ENCODE measurements at regions of chr15 and their contacts with region 1.

Region 1: GRCh38 chr15:49155110-49155833 is at the start of gene COPS2:
- DNase-seq: peak; percentile 78
- ATAC-seq: peak; percentile 93
- H3K4me3 Mint-ChIP-seq: peak within 1 kb of the TSS; percentile 95
- H3K27ac Mint-ChIP-seq: peak within 1 kb of the TSS; percentile 95
- H3K4me1 Mint-ChIP-seq: peaks cover 43% of the 10 kb centered on the region
- H3K27me3 Mint-ChIP-seq: no peaks in the 10 kb centered on the region
- CTCF ChIP-seq: no peak
- total RNA-seq, gene COPS2: 53.1 and 54.4 TPM in 2 replicates

Region 2: DNA sequence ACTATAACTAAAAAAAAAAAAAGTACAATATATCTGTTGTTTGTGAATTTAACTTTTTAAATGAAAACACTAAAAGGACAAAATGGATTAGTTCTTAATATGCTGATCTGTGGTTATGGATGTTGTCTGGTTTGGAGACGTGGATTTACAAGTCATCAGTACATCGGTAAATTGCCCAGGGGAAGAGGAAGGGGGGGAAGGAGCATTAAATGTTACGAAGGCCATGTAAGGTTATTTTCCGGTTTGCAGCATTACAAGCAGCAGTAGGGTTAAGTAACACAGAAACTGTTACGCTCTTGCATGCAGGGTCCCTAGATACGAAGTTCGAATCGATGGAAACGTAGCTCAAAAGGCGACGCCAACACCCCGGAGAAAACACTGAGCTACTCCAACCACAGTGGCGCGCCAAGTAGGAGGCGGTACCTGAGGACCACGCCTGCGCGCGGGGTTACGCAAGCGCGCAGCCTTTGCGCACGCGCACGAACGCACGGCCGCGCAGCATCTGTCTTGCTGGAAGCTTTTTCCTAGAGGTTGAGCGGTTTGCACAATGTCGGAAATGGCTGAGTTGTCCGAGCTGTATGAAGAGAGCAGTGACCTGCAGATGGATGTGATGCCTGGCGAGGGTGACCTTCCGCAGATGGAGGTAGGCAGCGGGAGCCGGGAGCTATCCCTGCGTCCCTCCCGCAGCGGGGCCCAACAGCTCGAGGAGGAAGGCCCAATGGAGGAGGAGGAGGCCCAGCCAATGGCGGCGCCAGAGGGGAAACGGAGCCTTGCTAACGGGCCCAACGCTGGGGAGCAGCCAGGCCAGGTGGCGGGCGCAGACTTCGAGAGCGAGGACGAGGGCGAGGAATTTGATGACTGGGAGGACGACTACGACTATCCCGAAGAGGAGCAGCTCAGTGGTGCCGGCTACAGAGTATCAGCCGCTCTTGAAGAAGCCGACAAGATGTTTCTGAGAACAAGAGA is 277.4 kb before region 1 on chr15 and contains the start of gene EID1:
- CTCF ChIA-PET with region 1: interaction called, 4 read pairs
- POLR2A ChIA-PET with region 1: interaction called, 9 read pairs
- intact Hi-C with region 1: loop called (anchors 1 kb)
- DNase-seq: peak; percentile 90
- ATAC-seq: peak; percentile 95
- H3K4me3 Mint-ChIP-seq: peak within 1 kb of the TSS; percentile 99
- H3K27ac Mint-ChIP-seq: peak within 1 kb of the TSS; percentile 97
- H3K4me1 Mint-ChIP-seq: peaks cover 27% of the 10 kb centered on the region
- H3K27me3 Mint-ChIP-seq: peaks cover 3% of the 10 kb centered on the region
- CTCF ChIP-seq: no peak
- total RNA-seq, gene EID1: 51.3 and 54.4 TPM in 2 replicates

Region 3: GRCh38 chr15:49135893-49136292 is 19.4 kb before region 1 on chr15:
- CTCF ChIA-PET with region 1: no interaction called
- POLR2A ChIA-PET with region 1: interaction called, 3 read pairs
- intact Hi-C with region 1: loop called (anchors 2 kb)
- DNase-seq: no peak
- ATAC-seq: no peak
- H3K4me3 Mint-ChIP-seq: no peak overlapping the region
- H3K27ac Mint-ChIP-seq: no peak overlapping the region
- H3K4me1 Mint-ChIP-seq: no peaks in the 10 kb centered on the region
- H3K27me3 Mint-ChIP-seq: no peaks in the 10 kb centered on the region
- CTCF ChIP-seq: no peak

Region 4: DNA sequence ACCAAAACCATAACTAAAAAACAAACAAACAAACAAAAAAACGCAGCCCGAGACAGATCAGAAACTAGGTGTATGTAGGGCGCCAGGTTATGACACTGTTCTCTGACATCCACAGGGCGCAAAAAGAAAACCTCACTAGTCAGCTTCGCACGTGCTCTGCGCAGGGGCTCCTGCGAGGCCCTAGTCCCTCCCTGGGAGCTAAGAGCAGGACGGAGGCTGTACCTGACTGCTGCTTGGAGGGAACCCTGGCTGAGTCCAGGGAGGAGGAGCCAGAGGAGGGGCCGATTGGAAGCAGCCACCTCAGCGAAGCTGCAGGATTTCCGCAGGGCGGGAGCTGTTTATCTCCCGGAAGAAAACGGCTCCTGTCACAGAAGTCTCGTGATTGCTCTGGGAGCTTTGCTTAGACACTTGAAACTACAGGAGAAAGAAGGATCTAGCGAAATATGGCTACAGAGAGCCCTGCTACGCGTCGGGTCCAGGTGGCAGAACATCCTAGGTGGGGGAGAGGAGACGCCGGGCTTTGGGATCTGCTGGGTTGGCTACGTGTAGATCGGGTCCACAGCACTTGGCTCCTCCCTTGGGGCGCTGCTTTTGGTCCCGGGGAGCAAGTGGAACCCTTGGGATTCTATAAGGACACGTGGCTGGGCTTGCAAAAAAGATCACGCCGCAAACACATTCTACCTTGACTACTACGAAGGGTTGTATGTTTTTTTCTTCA is 14.8 kb after region 1 on chr15 and contains the start of gene GALK2:
- CTCF ChIA-PET with region 1: no interaction called
- POLR2A ChIA-PET with region 1: interaction called, 15 read pairs
- intact Hi-C with region 1: loop called (anchors 1 kb)
- DNase-seq: peak; percentile 42
- ATAC-seq: peak; percentile 90
- H3K4me3 Mint-ChIP-seq: peak within 1 kb of the TSS; percentile 97
- H3K27ac Mint-ChIP-seq: peak within 1 kb of the TSS; percentile 85
- H3K4me1 Mint-ChIP-seq: peaks cover 30% of the 10 kb centered on the region
- H3K27me3 Mint-ChIP-seq: no peaks in the 10 kb centered on the region
- CTCF ChIP-seq: no peak
- total RNA-seq, gene GALK2: 16.6 and 18.4 TPM in 2 replicates

Region 5: DNA sequence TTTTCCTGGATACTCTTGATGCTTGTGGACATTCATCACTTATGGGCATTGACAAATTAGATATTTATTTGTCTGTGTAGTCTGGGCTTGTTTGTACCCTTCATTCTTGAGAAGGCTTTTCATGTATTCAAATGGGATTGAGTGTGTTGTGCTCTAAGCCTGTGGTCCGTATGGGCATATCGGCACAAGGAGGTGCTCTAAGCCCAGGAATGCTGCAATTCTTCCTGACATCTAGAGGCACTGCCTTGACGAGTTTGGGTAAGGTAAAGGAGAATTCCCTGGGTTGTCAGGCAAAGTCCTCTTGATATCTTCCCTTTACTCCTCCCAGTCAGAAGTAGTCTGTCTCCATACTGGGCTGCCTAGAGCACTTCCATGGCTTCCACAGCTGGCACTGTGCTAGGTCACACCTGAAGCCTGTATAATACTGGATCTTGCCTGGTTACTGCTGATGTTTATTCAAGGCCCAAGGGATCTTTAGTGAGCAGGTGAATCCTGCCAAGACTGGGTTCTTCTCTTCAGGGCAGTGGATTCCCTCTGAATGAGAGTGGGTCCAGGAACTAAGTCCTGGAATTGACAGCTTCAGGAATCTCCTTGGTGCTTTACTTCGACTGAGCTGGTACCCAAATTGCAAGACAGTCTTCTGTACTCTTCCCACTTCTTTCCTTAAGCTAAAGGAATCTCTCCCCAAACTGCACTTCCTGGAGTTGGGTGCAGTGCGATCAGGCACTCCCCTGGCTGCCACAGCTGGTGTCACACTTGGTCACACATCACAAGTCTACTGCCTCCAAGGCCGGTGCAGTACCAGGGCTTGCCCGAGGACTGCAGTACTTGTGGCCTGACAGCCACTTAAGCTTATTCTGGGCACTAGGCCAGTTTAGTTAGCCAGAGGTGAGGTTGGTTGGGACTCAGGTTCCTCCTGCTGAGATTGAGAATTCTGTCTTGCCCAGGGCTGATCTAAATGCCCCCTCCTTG is 60.8 kb after region 1 on chr15:
- CTCF ChIA-PET with region 1: no interaction called
- POLR2A ChIA-PET with region 1: no interaction called
- intact Hi-C with region 1: no loop called
- DNase-seq: no peak
- ATAC-seq: peak; percentile 96
- H3K4me3 Mint-ChIP-seq: no peak overlapping the region
- H3K27ac Mint-ChIP-seq: no peak overlapping the region
- H3K4me1 Mint-ChIP-seq: peaks cover 13% of the 10 kb centered on the region
- H3K27me3 Mint-ChIP-seq: no peaks in the 10 kb centered on the region
- CTCF ChIP-seq: no peak

Region 6: DNA sequence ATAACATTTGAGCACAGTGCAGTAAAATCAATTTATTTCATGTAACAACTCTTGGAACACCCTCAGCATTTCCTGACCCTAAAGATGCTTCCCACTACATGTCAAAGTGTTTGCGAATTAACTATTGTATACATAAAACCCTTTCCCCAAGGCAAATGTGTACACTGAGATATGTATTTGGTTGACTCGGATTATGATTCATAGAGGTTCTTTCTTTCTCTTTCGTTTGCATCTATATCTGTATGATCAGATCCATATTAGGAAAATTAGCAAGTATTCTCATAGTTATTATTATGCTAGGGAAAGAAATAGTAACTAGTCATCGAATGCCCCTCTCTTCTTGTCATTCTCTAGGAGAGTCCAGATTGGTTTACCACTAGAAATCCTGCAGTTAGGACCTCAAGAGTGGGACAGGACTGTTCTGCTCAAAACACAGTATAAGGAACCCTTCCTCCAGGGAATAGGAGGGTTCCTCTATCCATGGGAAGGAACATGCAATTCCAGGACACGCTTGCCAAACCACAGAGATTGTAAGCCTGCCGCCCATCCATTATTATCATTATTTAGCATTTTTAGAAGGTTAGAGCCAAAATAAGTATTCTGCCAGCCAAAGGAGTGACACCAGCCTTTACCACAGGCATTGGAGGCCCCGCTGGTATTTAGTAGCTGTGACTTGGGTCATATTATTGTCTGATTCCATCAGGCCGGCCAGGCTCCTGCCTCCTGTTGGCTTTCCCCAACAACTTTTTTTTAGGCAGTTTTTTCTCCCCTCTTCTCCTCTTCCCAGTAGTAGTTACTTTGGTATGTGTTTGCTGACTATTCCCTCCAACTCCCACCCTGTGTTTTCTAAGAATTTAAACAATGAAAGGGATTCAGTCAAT is 115.5 kb after region 1 on chr15:
- CTCF ChIA-PET with region 1: no interaction called
- POLR2A ChIA-PET with region 1: no interaction called
- intact Hi-C with region 1: no loop called
- DNase-seq: no peak
- ATAC-seq: no peak
- H3K4me3 Mint-ChIP-seq: no peak overlapping the region
- H3K27ac Mint-ChIP-seq: no peak overlapping the region
- H3K4me1 Mint-ChIP-seq: no peaks in the 10 kb centered on the region
- H3K27me3 Mint-ChIP-seq: no peaks in the 10 kb centered on the region
- CTCF ChIP-seq: no peak

Region 7: GRCh38 chr15:49290191-49290590 is 134.9 kb after region 1 on chr15:
- CTCF ChIA-PET with region 1: no interaction called
- POLR2A ChIA-PET with region 1: no interaction called
- intact Hi-C with region 1: no loop called
- DNase-seq: no peak
- ATAC-seq: no peak
- H3K4me3 Mint-ChIP-seq: no peak overlapping the region
- H3K27ac Mint-ChIP-seq: no peak overlapping the region
- H3K4me1 Mint-ChIP-seq: no peaks in the 10 kb centered on the region
- H3K27me3 Mint-ChIP-seq: no peaks in the 10 kb centered on the region
- CTCF ChIP-seq: no peak